ENCODE measurements at regions of chr4 and their contacts with region 1.

Region 1: GRCh38 chr4:76430519-76431388 is 4.3 kb upstream of the SHROOM3 start:
- DNase-seq: no peak
- H3K4me3 ChIP-seq: no peak overlapping the region
- H3K27ac ChIP-seq: no peak overlapping the region
- H3K4me1 ChIP-seq: peaks cover 0 to 10% (median 8%) of the 10 kb centered on the region in 4 experiments; a peak in 4 of 7 replicates
- H3K27me3 ChIP-seq: no peaks in the 10 kb centered on the region
- CTCF ChIP-seq: peak in 2 of 3 experiments; percentile 43 to 45; a peak in 2 of 4 replicates
- EP300 ChIP-seq: no peak
- POLR2A ChIP-seq: no peak
- RAD21 ChIP-seq: peak; percentile 72 to 83

Region 2: GRCh38 chr4:76441881-76442280 is 11.1 kb after region 1 on chr4:
- CTCF ChIA-PET with region 1: interaction called, 23 read pairs
- POLR2A ChIA-PET with region 1: interaction called, 4 read pairs
- DNase-seq: no peak
- H3K4me3 ChIP-seq: no peak overlapping the region
- H3K27ac ChIP-seq: no peak overlapping the region
- H3K4me1 ChIP-seq: peaks cover 0 to 3% (median 0%) of the 10 kb centered on the region in 4 experiments; a peak in 1 of 7 replicates
- H3K27me3 ChIP-seq: no peaks in the 10 kb centered on the region
- CTCF ChIP-seq: no peak
- EP300 ChIP-seq: no peak
- POLR2A ChIP-seq: no peak
- RAD21 ChIP-seq: no peak

Region 3: DNA sequence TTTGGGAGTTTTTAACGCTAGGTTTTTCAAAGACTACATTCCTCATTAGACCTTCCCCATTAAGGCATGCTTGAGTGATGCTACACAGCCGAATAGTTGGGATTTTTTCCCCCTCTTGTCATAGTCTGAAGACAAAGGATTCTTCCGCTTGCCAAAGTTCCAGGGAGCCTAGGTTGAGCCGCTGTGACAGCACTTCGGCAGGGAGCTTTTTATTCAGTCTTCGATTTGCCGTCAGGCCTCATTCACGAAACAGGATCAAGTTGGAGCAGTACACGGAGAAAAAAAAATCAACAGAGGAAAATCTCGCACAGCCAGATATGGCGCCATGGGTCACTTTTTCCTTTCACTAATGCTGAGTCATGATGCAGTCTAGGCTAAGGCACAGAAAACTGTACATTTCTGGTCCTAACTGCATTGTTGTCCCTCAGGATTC is 28.6 kb after region 1 on chr4:
- CTCF ChIA-PET with region 1: interaction called, 9 read pairs
- POLR2A ChIA-PET with region 1: interaction called, 15 read pairs
- DNase-seq: peak in 1 of 2 experiments; percentile 88
- H3K4me3 ChIP-seq: peak overlapping the region in 2 of 4 experiments; percentile 16 to 23; a peak in 2 of 8 replicates
- H3K27ac ChIP-seq: peak overlapping the region; percentile 77
- H3K4me1 ChIP-seq: peaks cover 3 to 10% (median 9%) of the 10 kb centered on the region in 4 experiments; a peak in 5 of 7 replicates
- H3K27me3 ChIP-seq: no peaks in the 10 kb centered on the region
- CTCF ChIP-seq: no peak
- EP300 ChIP-seq: no peak
- POLR2A ChIP-seq: peak in 1 of 2 experiments; percentile 73; a peak in 2 of 3 replicates
- RAD21 ChIP-seq: 0 out of 4 replicates have a peak, but pooled peaks of 1 of the 2 experiments have one; percentile 7

Region 4: GRCh38 chr4:76485450-76485849 is 54.7 kb after region 1 on chr4:
- CTCF ChIA-PET with region 1: interaction called, 10 read pairs
- POLR2A ChIA-PET with region 1: interaction called, 3 read pairs
- DNase-seq: peak in 1 of 2 experiments; percentile 13
- H3K4me3 ChIP-seq: peak overlapping the region in 1 of 4 experiments; percentile 2; a peak in 1 of 8 replicates
- H3K27ac ChIP-seq: no peak overlapping the region
- H3K4me1 ChIP-seq: peaks cover 3 to 15% (median 11%) of the 10 kb centered on the region in 4 experiments; a peak in 5 of 7 replicates
- H3K27me3 ChIP-seq: no peaks in the 10 kb centered on the region
- CTCF ChIP-seq: no peak
- EP300 ChIP-seq: no peak
- POLR2A ChIP-seq: no peak
- RAD21 ChIP-seq: no peak

Region 5: GRCh38 chr4:76504613-76505465 is 74.1 kb after region 1 on chr4:
- CTCF ChIA-PET with region 1: interaction called, 314 read pairs
- POLR2A ChIA-PET with region 1: interaction called, 13 read pairs
- DNase-seq: no peak
- H3K4me3 ChIP-seq: no peak overlapping the region
- H3K27ac ChIP-seq: no peak overlapping the region
- H3K4me1 ChIP-seq: no peaks in the 10 kb centered on the region
- H3K27me3 ChIP-seq: no peaks in the 10 kb centered on the region
- CTCF ChIP-seq: peak in 2 of 3 experiments; percentile 38 to 57; a peak in 2 of 4 replicates
- EP300 ChIP-seq: no peak
- POLR2A ChIP-seq: no peak
- RAD21 ChIP-seq: peak; percentile 70 to 73

Region 6: DNA sequence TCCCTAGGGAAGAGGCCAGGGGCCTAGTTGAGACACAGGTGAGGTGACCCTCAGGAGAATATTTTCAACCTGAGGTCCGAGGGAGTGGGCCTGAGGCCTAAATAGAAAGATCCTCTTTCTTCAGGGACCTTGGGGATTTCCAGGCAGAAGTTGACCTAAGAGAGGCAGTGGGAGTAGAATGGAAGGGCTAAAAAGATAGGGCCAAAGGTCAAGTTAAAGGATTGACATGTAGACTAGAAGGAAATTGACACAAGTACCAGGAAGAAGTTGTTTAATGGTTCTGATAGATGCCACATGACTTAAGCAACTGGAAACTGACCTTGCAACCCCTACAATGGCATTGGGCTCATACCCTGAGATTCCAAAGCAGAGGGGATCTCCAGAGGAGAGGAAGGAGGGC is 81.2 kb after region 1 on chr4:
- CTCF ChIA-PET with region 1: interaction called, 19 read pairs
- POLR2A ChIA-PET with region 1: interaction called, 3 read pairs
- DNase-seq: no peak
- H3K4me3 ChIP-seq: no peak overlapping the region
- H3K27ac ChIP-seq: no peak overlapping the region
- H3K4me1 ChIP-seq: no peaks in the 10 kb centered on the region; a peak in 1 of 7 replicates
- H3K27me3 ChIP-seq: no peaks in the 10 kb centered on the region
- CTCF ChIP-seq: no peak
- EP300 ChIP-seq: no peak
- POLR2A ChIP-seq: no peak
- RAD21 ChIP-seq: no peak

Region 7: GRCh38 chr4:76758290-76758882 is 327.6 kb after region 1 on chr4:
- CTCF ChIA-PET with region 1: interaction called, 12 read pairs
- POLR2A ChIA-PET with region 1: interaction called, 3 read pairs
- DNase-seq: peak in 1 of 2 experiments; percentile 55
- H3K4me3 ChIP-seq: no peak overlapping the region
- H3K27ac ChIP-seq: no peak overlapping the region
- H3K4me1 ChIP-seq: no peaks in the 10 kb centered on the region
- H3K27me3 ChIP-seq: no peaks in the 10 kb centered on the region
- CTCF ChIP-seq: peak; percentile 44 to 68 (median 55)
- EP300 ChIP-seq: no peak
- POLR2A ChIP-seq: no peak
- RAD21 ChIP-seq: peak; percentile 42 to 61